ENCODE measurements at regions of chr17 and their contacts with region 1.

Region 1: GRCh38 chr17:68247445-68248198 is at the start of gene AMZ2:
- DNase-seq: peak; percentile 96
- ATAC-seq: peak; percentile 90
- H3K4me3 Mint-ChIP-seq: peak within 1 kb of the TSS; percentile 81
- H3K27ac Mint-ChIP-seq: peak within 1 kb of the TSS; percentile 91
- H3K4me1 Mint-ChIP-seq: peaks cover 48% of the 10 kb centered on the region
- H3K27me3 Mint-ChIP-seq: no peaks in the 10 kb centered on the region
- total RNA-seq, gene AMZ2: 106 to 107 TPM

Region 2: DNA sequence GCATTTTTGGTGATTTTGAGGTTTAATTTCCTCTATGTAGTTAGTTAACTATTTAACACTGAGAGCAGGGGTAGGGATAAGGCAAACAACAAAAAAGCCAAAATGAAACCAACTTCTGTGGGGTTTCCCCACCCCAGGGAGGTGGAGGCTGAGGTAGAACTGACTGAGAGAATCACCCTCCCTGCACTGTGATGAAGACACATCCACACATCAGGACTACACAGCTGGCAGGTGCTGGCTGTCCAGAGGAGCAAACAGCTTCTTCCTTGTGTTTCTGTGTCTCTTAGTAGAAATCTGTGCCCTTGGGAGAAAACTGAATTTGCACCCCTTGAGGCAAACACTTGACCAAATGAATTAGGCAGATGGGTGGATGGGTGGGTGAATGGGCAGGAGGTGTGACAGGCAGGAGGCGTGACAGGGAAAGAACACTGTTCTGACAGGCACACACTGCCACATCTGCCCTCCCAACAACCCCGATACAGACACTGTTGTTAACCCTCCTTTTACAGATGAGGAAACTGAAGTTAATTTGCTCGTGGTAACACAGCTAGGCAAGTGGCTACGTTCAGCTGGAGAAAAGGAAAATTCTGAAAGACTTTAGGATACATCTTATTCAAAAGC is 62.7 kb before region 1 on chr17:
- CTCF ChIA-PET with region 1: interaction called, 14 read pairs
- DNase-seq: peak; percentile 80
- ATAC-seq: peak; percentile 69
- H3K4me3 Mint-ChIP-seq: peak overlapping the region; percentile 85
- H3K27ac Mint-ChIP-seq: peak overlapping the region; percentile 92
- H3K4me1 Mint-ChIP-seq: peaks cover 63% of the 10 kb centered on the region
- H3K27me3 Mint-ChIP-seq: no peaks in the 10 kb centered on the region

Region 3: DNA sequence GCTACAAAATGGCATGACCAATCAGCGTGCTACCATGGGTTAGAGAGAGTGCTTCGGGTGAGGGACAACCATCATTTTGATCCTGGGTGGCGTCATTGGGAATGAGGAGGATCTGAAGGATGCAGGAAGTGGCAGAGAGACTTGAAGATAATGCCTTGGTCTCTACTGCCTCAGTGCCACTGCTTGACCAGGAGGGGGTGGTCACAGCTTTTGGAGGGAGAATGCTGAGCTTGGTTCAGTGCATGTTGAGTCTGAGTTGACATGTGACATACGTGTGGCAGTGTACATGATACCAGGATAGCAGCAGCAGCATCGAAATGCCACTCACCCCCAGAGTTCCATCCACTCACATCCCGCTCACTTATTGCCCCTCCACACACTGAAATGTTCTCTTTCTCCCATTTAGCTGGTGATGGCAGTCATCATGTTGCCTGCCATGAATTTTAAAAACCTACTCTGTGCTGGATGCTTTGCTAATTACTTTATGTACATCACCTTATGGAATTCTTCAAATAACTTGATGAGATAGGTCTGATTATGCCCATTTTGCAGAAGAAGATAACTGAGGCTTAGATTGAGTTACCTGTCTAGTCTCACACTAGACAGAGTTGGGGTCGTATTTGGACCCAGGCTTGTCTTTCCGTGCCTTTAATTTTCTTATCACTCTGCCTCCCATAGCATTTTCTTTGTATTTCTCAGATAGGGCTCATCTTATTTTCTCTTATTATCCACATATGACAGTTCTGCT is 80.4 kb after region 1 on chr17:
- CTCF ChIA-PET with region 1: no interaction called
- DNase-seq: no peak
- ATAC-seq: no peak
- H3K4me3 Mint-ChIP-seq: no peak overlapping the region
- H3K27ac Mint-ChIP-seq: no peak overlapping the region
- H3K4me1 Mint-ChIP-seq: peaks cover 19% of the 10 kb centered on the region
- H3K27me3 Mint-ChIP-seq: no peaks in the 10 kb centered on the region

Region 4: DNA sequence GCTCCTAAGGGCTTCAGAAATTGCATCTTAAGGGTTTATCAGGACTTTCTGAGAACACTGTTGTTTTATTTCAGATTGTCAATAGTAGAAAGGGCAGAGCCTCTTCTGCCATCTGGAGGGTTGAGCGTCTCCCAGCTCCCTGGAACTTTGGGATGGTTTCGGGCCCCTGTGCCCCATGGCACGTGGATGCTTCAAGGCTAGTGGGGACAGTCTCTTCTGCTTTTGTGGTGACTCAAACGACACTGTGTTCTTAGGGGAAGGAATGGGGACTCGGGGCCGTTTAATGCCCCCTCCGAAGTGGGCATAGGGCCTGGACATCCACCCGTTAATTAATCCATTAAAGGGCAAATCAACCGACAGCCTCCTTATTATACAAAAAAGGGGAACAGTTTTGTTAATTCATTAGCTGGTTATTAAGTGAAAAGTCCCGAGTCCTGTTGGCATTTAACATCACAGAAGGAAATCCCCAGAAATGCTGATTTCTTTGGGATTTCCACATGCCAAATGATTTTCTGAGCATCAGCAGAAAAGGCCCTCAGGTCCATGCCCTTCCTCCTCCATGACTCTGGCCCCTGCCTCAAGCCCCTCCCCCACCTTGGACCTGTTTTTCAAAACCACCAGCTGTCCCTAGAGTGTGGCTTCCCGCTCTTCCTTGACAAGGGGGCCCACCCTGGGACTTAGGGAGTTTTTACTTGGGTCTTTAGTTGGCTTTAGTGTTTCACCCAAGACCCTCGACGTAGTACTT is 112.3 kb after region 1 on chr17:
- CTCF ChIA-PET with region 1: no interaction called
- DNase-seq: no peak
- ATAC-seq: no peak
- H3K4me3 Mint-ChIP-seq: no peak overlapping the region
- H3K27ac Mint-ChIP-seq: no peak overlapping the region
- H3K4me1 Mint-ChIP-seq: peaks cover 47% of the 10 kb centered on the region
- H3K27me3 Mint-ChIP-seq: no peaks in the 10 kb centered on the region

Measured in activated CD8-positive, alpha-beta memory T cell treated with anti-CD3 and anti-CD28 coated beads, Interleukin-2, amount 10 ng/mL, durations not matched to agents 7 days and 5 days (primary cell).